ENCODE measurements at regions of chr14 and their contacts with region 1.

Region 1: GRCh38 chr14:25111061-25111601 is 61.2 kb upstream of the STXBP6 start:
- DNase-seq: no peak
- ATAC-seq: no peak
- H3K4me3 ChIP-seq: no peak overlapping the region
- H3K27ac ChIP-seq: no peak overlapping the region
- H3K4me1 ChIP-seq: no peaks in the 10 kb centered on the region
- H3K27me3 ChIP-seq: no peaks in the 10 kb centered on the region
- CTCF ChIP-seq: no peak

Region 2: GRCh38 chr14:24721775-24722174 is 389.4 kb before region 1 on chr14:
- CTCF ChIA-PET with region 1: no interaction called
- POLR2A ChIA-PET with region 1: interaction called, 18 read pairs
- in situ Hi-C with region 1: no loop called
- intact Hi-C with region 1: no loop called
- DNase-seq: no peak
- ATAC-seq: no peak
- H3K4me3 ChIP-seq: no peak overlapping the region
- H3K27ac ChIP-seq: no peak overlapping the region
- H3K4me1 ChIP-seq: no peaks in the 10 kb centered on the region
- H3K27me3 ChIP-seq: no peaks in the 10 kb centered on the region
- CTCF ChIP-seq: no peak

Region 3: GRCh38 chr14:25049568-25050268 is 61.4 kb before region 1 on chr14 and contains the start of gene STXBP6:
- CTCF ChIA-PET with region 1: no interaction called
- POLR2A ChIA-PET with region 1: no interaction called
- in situ Hi-C with region 1: no loop called
- intact Hi-C with region 1: no loop called
- DNase-seq: no peak
- ATAC-seq: peak; percentile 80
- H3K4me3 ChIP-seq: peak within 1 kb of the TSS; percentile 29
- H3K27ac ChIP-seq: no peak within 1 kb of the TSS
- H3K4me1 ChIP-seq: no peaks in the 10 kb centered on the region
- H3K27me3 ChIP-seq: peaks cover 17% of the 10 kb centered on the region
- CTCF ChIP-seq: no peak
- total RNA-seq, gene STXBP6: not detected